GM13977 (cell line): ENCODE measurements at regions of chr13 and their contacts with region 1.

Region 1: GRCh38 chr13:51444922-51445321 is 7.9 kb downstream of the INTS6 start:
- DNase-seq: no peak
- CTCF ChIP-seq: no peak

Region 2: GRCh38 chr13:50801087-50801931 is 643.6 kb before region 1 on chr13:
- in situ Hi-C with region 1: no loop called
- DNase-seq: peak; percentile 38
- CTCF ChIP-seq: peak; percentile 83

Region 3: DNA sequence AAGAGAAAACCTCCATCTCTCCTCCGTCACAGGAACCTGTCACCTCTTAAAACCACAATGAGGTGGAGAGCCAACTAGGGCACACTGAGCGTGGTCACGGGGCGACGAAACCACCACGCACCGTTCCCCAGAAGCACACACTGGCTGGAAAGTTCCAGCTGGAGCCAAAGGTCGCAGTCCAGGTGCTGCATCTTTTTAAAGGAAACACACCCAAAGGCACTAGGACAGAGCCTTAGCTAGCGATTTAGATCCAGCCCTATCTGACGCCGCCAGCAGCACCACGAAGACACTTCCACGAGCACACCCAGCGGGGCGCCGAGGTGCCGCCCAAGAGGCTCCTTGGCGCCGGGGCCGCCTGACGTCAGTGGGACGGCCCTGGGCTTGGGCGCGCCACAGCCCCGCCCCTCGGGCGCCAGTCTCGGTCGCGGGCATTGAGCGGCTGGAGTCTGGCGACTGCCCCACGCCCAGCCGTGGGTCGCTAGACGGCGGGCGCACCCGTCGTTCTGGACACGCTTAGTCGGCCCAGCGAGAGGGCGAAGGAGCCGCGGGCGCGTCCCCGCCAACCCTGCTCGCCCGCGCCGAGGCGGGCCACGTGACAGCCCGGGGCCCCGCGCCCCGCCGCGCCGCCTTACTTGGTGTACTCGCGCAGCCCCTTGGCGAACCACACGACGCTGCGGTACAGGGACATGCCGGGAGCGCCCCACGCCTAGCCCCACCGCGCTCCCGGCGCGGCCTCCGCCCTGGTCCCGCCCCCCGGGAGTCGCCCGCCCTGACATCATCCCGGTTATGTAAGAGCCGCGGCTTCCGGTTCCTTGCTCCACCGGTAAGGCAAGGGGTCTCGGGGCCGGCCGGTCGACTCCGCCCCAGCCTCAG is 358.7 kb after region 1 on chr13 and contains the start of gene DHRS12:
- in situ Hi-C with region 1: loop called (anchors 10 kb)
- DNase-seq: peak; percentile 93
- CTCF ChIP-seq: peak; percentile 12